HEK293T (cell line): ENCODE measurements at regions of chrX and their contacts with region 1.

Region 1: GRCh38 chrX:136953867-136954787 is 73.6 kb upstream of the RBMX start:
- DNase-seq: peak; percentile 77

Region 2: GRCh38 chrX:136941396-136942337 is 12.5 kb before region 1 on chrX:
- CTCF ChIA-PET with region 1: no interaction called
- POLR2A ChIA-PET with region 1: no interaction called
- DNase-seq: no peak

Region 3: GRCh38 chrX:137051978-137052642 is 98.0 kb after region 1 on chrX:
- CTCF ChIA-PET with region 1: interaction called, 10 read pairs
- POLR2A ChIA-PET with region 1: no interaction called
- DNase-seq: peak; percentile 89

Region 4: GRCh38 chrX:137081239-137081638 is 127.1 kb after region 1 on chrX:
- CTCF ChIA-PET with region 1: no interaction called
- POLR2A ChIA-PET with region 1: no interaction called
- DNase-seq: no peak